ENCODE measurements at regions of chr3 and their contacts with region 1.

Region 1: GRCh38 chr3:128794770-128795649 is 69.0 kb downstream of the RAB7A start:
- DNase-seq: peak in 1 of 2 experiments; percentile 55
- H3K4me3 ChIP-seq: no peak overlapping the region
- H3K27ac ChIP-seq: peak overlapping the region; percentile 41; the same call in 1 of the 2 replicates
- H3K4me1 ChIP-seq: 0 out of 2 replicates have a peak, but pooled peaks cover 7% of the 10 kb centered on the region
- H3K27me3 ChIP-seq: no peaks in the 10 kb centered on the region
- CTCF ChIP-seq: peak; percentile 85

Region 2: GRCh38 chr3:128033102-128033501 is 761.9 kb before region 1 on chr3:
- CTCF ChIA-PET with region 1: no interaction called
- POLR2A ChIA-PET with region 1: interaction called, 33 read pairs
- intact Hi-C with region 1: no loop called
- DNase-seq: peak in 1 of 2 experiments; percentile 41
- H3K4me3 ChIP-seq: no peak overlapping the region
- H3K27ac ChIP-seq: no peak overlapping the region
- H3K4me1 ChIP-seq: no peaks in the 10 kb centered on the region
- H3K27me3 ChIP-seq: peaks cover 13% of the 10 kb centered on the region
- CTCF ChIP-seq: no peak

Region 3: DNA sequence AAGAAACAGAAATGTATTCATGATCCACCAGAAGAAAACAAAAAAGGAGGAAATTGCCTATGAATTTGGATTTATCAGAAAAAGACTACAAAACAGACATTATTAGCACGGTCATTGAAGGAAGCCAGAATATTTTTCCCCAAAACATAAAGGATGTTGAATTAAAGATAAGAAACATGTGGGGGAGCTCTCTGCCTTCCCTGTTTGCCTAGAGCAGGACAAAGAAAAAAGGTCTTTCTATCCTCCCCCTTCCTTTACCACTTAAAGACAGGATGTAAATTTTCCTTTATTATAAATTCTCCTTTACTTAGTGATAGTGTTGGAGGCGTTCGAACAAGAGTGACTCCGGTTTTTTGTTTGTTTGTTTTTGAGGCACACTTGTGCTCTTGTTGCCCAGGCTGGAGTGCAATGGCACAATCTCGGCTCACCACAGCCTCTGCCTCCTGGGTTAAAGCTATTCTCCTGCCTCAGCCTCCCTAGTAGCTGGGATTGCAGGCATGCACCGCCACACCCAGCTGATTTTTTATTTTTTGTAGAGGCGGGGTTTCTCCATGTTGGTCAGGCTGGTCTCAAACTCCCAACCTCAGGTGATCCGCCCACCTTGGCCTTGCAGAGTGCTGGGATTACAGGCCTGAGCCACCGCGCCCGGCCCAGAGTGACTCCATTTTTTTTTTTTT is 129.5 kb before region 1 on chr3:
- CTCF ChIA-PET with region 1: interaction called, 15 read pairs
- POLR2A ChIA-PET with region 1: no interaction called
- intact Hi-C with region 1: no loop called
- DNase-seq: no peak
- H3K4me3 ChIP-seq: peak overlapping the region; percentile 21; the same call in 1 of the 2 replicates
- H3K27ac ChIP-seq: no peak overlapping the region
- H3K4me1 ChIP-seq: no peaks in the 10 kb centered on the region
- H3K27me3 ChIP-seq: no peaks in the 10 kb centered on the region
- CTCF ChIP-seq: no peak; the same call in 1 of the 2 replicates

Region 4: GRCh38 chr3:128725932-128726690 is 68.9 kb before region 1 on chr3 and contains the start of gene RAB7A:
- CTCF ChIA-PET with region 1: no interaction called
- POLR2A ChIA-PET with region 1: no interaction called
- intact Hi-C with region 1: loop called (anchors 5 kb)
- DNase-seq: peak; percentile 88 to 97
- H3K4me3 ChIP-seq: peak within 1 kb of the TSS; percentile 99
- H3K27ac ChIP-seq: peak within 1 kb of the TSS; percentile 73
- H3K4me1 ChIP-seq: peaks cover 31% of the 10 kb centered on the region
- H3K27me3 ChIP-seq: no peaks in the 10 kb centered on the region
- CTCF ChIP-seq: no peak
- total RNA-seq, gene RAB7A: 197 and 319 TPM in 2 replicates

Region 5: GRCh38 chr3:128763967-128764366 is 31.0 kb before region 1 on chr3:
- CTCF ChIA-PET with region 1: interaction called, 10 read pairs
- POLR2A ChIA-PET with region 1: no interaction called
- intact Hi-C with region 1: no loop called
- DNase-seq: no peak
- H3K4me3 ChIP-seq: no peak overlapping the region
- H3K27ac ChIP-seq: no peak overlapping the region
- H3K4me1 ChIP-seq: no peaks in the 10 kb centered on the region
- H3K27me3 ChIP-seq: no peaks in the 10 kb centered on the region
- CTCF ChIP-seq: no peak

Region 6: DNA sequence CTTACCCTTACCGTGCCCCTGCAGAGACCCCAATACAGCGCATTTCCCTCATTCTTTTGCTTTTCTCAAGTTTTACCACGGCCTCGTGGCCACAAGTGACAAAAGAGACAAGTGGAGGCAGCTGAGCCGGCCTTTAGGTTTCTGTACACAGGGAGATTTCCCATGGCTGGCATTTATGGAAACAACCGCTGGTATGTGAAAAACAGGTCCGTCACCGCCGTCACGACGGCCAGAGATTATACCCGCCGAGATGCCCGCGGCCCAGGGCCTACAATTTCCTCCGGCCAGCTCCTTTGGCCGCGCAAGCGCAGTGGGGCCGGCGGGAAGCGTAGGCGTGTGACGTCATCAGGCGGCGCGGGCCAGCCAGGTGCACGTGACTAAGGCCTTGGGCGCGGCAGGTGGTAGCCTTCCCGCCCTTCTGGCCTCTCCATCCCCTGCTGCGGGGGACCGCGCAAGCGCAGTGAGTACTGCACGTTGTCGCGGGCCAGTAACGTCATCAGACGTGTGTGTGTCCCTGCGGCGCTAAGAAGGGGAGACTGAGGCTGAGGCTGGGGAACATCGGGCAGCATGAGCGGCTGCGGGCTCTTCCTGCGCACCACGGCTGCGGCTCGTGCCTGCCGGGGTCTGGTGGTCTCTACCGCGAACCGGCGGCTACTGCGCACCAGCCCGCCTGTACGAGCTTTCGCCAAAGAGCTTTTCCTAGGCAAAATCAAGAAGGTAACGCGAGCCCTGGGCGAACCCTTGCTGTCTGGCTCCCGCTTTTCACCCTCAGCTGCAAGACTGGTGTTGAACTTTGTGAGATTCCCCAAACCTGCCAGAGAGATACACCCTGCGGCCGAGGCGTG is 84.3 kb after region 1 on chr3 and contains the start of gene ACAD9:
- CTCF ChIA-PET with region 1: no interaction called
- POLR2A ChIA-PET with region 1: no interaction called
- intact Hi-C with region 1: loop called (anchors 2 kb)
- DNase-seq: peak; percentile 89 to 99
- H3K4me3 ChIP-seq: peak within 1 kb of the TSS; percentile 82
- H3K27ac ChIP-seq: peak within 1 kb of the TSS; percentile 86
- H3K4me1 ChIP-seq: peaks cover 18% of the 10 kb centered on the region
- H3K27me3 ChIP-seq: no peaks in the 10 kb centered on the region
- CTCF ChIP-seq: no peak
- total RNA-seq, gene ACAD9: 76.5 and 81.4 TPM in 2 replicates

Measured in PC-9 (cell line).